CD4-positive, alpha-beta memory T cell (primary cell): ENCODE measurements at regions of chr2 and their contacts with region 1.

Region 1: GRCh38 chr2:232310121-232310520 is 68.4 kb upstream of the ALPP start:
- DNase-seq: peak in 1 of 5 donors; percentile 59
- H3K4me3 ChIP-seq: peak overlapping the region in 1 of 2 donors; percentile 4
- H3K4me3 Mint-ChIP-seq: peak overlapping the region; percentile 38 to 80 (median 69)
- H3K27ac ChIP-seq: peak overlapping the region; percentile 35
- H3K27ac Mint-ChIP-seq: peak overlapping the region; percentile 86 to 95 (median 90)
- H3K4me1 ChIP-seq: peaks cover 67% of the 10 kb centered on the region
- H3K4me1 Mint-ChIP-seq: peaks cover 54 to 81% (median 63%) of the 10 kb centered on the region in 4 donors
- H3K27me3 ChIP-seq: no peaks in the 10 kb centered on the region
- H3K27me3 Mint-ChIP-seq: no peaks in the 10 kb centered on the region

Region 2: GRCh38 chr2:232292395-232293154 is 17.5 kb before region 1 on chr2:
- CTCF ChIA-PET with region 1: interaction called, 58 read pairs
- POLR2A ChIA-PET with region 1: interaction called, 7 read pairs
- intact Hi-C with region 1: no loop called
- DNase-seq: peak in 4 of 5 donors; percentile 26 to 31 (median 28)
- H3K4me3 ChIP-seq: no peak overlapping the region
- H3K4me3 Mint-ChIP-seq: no peak overlapping the region
- H3K27ac ChIP-seq: no peak overlapping the region
- H3K27ac Mint-ChIP-seq: peak overlapping the region in 4 of 7 donors; percentile 11 to 81 (median 51)
- H3K4me1 ChIP-seq: peaks cover 4% of the 10 kb centered on the region
- H3K4me1 Mint-ChIP-seq: peaks cover 0 to 14% (median 4%) of the 10 kb centered on the region in 4 donors
- H3K27me3 ChIP-seq: no peaks in the 10 kb centered on the region
- H3K27me3 Mint-ChIP-seq: no peaks in the 10 kb centered on the region

Region 3: GRCh38 chr2:232321156-232321816 is 11.2 kb after region 1 on chr2:
- CTCF ChIA-PET with region 1: interaction called, 52 read pairs
- POLR2A ChIA-PET with region 1: interaction called, 4 read pairs
- intact Hi-C with region 1: no loop called
- DNase-seq: peak in 4 of 5 donors; percentile 26 to 39 (median 35)
- H3K4me3 ChIP-seq: no peak overlapping the region
- H3K4me3 Mint-ChIP-seq: peak overlapping the region in 7 of 8 donors; percentile 6 to 46 (median 25)
- H3K27ac ChIP-seq: peak overlapping the region; percentile 12
- H3K27ac Mint-ChIP-seq: peak overlapping the region; percentile 57 to 93 (median 87)
- H3K4me1 ChIP-seq: peaks cover 69% of the 10 kb centered on the region
- H3K4me1 Mint-ChIP-seq: peaks cover 35 to 71% (median 54%) of the 10 kb centered on the region in 4 donors
- H3K27me3 ChIP-seq: no peaks in the 10 kb centered on the region
- H3K27me3 Mint-ChIP-seq: no peaks in the 10 kb centered on the region

Region 4: GRCh38 chr2:232327105-232328041 is 17.3 kb after region 1 on chr2:
- CTCF ChIA-PET with region 1: interaction called, 52 read pairs
- POLR2A ChIA-PET with region 1: interaction called, 4 read pairs
- intact Hi-C with region 1: no loop called
- DNase-seq: peak; percentile 73 to 85 (median 77)
- H3K4me3 ChIP-seq: no peak overlapping the region
- H3K4me3 Mint-ChIP-seq: no peak overlapping the region
- H3K27ac ChIP-seq: no peak overlapping the region
- H3K27ac Mint-ChIP-seq: peak overlapping the region in 4 of 7 donors; percentile 41 to 77 (median 52)
- H3K4me1 ChIP-seq: peaks cover 13% of the 10 kb centered on the region
- H3K4me1 Mint-ChIP-seq: peaks cover 6 to 24% (median 10%) of the 10 kb centered on the region in 4 donors
- H3K27me3 ChIP-seq: no peaks in the 10 kb centered on the region
- H3K27me3 Mint-ChIP-seq: no peaks in the 10 kb centered on the region